ENCODE measurements at regions of chr6 and their contacts with region 1.

Region 1: DNA sequence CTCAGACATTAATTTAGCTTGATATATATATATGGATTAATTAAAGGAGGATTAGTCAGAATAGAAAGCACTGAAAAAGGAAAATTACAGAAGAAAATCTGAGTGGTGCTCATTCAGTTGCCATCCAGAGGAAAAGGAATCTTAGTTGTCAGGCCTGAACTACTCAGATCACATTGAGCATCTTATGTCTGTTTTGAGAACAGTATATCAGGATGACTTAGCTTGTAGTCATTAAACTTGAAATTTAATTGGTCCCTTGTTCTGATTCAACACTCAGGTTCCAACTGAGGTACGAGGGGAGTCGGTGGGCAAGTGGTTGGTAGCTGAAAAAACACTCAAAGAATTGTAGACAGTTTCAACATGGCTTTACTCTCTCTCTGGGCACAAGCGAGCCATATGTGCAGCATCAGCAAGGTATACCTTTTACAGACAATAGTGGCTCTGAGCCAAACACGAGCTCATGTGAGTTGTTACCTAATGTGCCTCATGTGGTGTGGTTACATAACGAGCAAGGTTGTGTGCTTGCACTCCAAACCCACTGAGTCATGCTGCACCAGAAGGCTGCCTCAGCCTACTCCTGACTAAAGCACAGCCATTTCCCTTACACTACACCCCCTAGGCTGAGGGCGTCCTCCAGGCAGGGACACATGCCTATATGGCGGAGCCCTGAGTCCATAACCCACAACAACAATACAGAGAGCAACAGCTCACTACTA is 73.0 kb upstream of the HMGN3 start:
- DNase-seq: peak in 1 of 2 experiments; percentile 41
- H3K4me3 ChIP-seq: no peak overlapping the region
- H3K27ac ChIP-seq: 0 out of 2 replicates have a peak overlapping the region, but pooled peaks have one; percentile 12
- H3K4me1 ChIP-seq: peaks cover 19% of the 10 kb centered on the region
- H3K27me3 ChIP-seq: no peaks in the 10 kb centered on the region
- CTCF ChIP-seq: no peak

Region 2: DNA sequence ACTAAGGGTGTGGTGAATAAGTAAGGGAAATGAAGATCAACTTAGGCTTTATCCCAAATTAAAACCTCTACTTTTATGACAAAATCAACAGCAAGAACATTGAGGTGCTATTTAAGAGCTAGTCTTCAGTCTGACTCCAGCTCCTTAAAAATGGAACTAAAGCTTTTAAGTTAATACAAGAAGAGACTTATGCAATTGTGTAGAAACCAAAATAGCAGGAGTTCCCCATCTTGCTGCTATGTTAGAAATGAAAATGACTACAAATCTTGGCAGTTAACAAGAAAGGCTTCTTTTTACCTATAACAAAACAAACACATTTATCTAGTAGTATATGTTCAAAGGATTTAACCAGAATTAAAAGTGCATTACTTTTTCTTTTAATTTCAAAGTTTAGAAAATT is 98.7 kb before region 1 on chr6:
- CTCF ChIA-PET with region 1: no interaction called
- POLR2A ChIA-PET with region 1: interaction called, 25 read pairs
- intact Hi-C with region 1: no loop called
- DNase-seq: no peak
- H3K4me3 ChIP-seq: no peak overlapping the region
- H3K27ac ChIP-seq: no peak overlapping the region
- H3K4me1 ChIP-seq: no peaks in the 10 kb centered on the region
- H3K27me3 ChIP-seq: no peaks in the 10 kb centered on the region
- CTCF ChIP-seq: no peak

Region 3: GRCh38 chr6:79250107-79250514 is 57.4 kb before region 1 on chr6:
- CTCF ChIA-PET with region 1: no interaction called
- POLR2A ChIA-PET with region 1: no interaction called
- intact Hi-C with region 1: no loop called
- DNase-seq: no peak
- H3K4me3 ChIP-seq: no peak overlapping the region
- H3K27ac ChIP-seq: no peak overlapping the region
- H3K4me1 ChIP-seq: no peaks in the 10 kb centered on the region
- H3K27me3 ChIP-seq: no peaks in the 10 kb centered on the region
- CTCF ChIP-seq: no peak

Region 4: DNA sequence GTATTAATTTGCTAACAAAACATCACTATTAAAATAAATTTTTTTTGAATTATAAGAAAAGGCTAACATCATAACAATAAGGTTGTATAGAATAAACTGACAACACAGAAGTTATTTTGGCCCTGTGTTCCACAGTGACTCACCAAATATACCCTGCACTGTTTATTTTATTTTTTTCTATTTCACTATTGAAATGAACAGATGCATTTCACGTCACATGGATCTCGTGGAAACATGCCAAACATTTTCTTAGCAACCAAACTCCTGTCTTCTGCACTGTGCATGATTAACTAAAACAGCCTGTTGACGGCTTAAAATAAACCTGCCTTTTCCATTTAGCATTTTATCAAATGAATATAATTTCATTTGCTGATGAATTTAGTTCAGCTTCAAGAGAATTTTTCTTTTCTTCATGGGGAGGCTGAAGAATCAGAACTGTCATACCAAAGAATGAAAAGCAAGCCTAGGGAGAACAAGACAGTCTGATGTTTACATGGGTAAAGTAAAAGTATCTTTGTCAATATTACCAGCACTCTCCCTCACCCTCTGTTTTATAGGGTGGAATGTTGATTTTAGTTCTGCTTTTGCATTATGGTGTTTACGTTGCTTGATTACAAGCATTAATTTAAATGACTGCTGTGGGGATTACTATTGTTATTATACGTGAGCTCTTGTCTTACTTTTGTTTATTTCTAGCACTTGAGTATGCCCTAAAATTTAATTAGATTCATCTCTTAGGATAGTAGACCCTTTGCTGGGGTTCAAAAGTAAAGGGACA is 114.4 kb after region 1 on chr6:
- CTCF ChIA-PET with region 1: no interaction called
- POLR2A ChIA-PET with region 1: no interaction called
- intact Hi-C with region 1: no loop called
- DNase-seq: peak in 1 of 2 experiments; percentile 37
- H3K4me3 ChIP-seq: no peak overlapping the region
- H3K27ac ChIP-seq: no peak overlapping the region
- H3K4me1 ChIP-seq: no peaks in the 10 kb centered on the region
- H3K27me3 ChIP-seq: no peaks in the 10 kb centered on the region
- CTCF ChIP-seq: no peak

Region 5: DNA sequence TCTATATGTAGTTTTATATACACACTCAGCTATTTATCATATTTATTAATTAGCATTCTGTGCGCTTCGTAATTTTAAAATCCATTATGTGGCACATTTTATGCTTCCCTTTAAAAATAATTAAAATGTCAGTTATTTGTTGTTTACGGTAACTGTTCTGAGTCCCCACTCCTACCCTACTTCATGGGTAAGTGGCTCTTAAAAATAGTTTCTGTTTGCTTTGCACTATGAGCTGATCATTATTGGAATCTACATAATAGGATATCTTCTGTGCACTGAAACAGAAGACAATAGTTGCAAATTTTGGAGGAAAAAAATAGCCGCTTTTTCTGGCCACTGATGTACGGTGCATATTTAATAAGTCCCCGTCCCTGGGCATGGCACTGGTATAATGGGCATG is 204.5 kb after region 1 on chr6:
- CTCF ChIA-PET with region 1: no interaction called
- POLR2A ChIA-PET with region 1: no interaction called
- intact Hi-C with region 1: no loop called
- DNase-seq: no peak
- H3K4me3 ChIP-seq: no peak overlapping the region
- H3K27ac ChIP-seq: no peak overlapping the region
- H3K4me1 ChIP-seq: no peaks in the 10 kb centered on the region
- H3K27me3 ChIP-seq: no peaks in the 10 kb centered on the region
- CTCF ChIP-seq: no peak